Activated CD4-positive, alpha-beta T cell treated with anti-CD3 and anti-CD28 coated beads, Interleukin-2, amount 10 ng/mL, durations not matched to agents 24 days and 14 days (primary cell): ENCODE measurements at regions of chr1 and their contacts with region 1.

Region 1: DNA sequence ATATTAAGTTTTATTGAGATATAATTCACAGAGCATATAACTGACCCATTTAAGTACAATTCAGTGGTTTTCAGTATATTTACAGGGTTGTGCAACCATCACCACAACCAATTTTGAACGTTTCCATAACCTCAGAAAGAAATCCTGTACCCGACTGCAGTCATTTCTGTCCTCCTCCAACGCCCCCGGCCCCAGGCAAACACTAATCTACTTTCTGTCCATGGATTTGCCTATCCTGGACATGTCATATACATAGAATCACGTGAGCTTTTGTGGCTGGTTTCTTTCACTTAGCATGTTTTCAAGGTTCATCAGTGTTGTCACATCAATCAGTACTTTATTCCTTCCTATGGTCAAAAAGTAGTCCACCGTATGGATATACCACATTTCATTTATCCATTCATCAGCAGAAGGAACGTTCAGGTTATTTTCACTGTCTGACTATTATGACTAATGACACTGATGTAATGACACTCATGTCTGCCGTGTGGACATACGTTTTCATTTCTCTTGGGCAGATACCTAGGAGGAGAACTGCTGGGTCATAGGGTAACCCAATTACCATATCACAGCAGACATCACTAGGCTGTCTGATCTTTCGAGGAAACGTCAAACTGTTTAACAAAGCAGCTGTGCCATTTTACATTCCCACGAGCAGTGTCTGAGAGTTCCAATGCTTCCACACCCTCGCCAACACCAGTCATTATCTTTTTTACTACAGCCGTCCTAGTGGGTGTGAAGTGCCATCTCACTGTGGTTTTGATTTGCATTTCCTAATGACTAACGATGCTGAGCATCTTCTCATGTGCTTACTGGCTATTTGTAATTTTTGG is 30.8 kb downstream of the MRPL37 start:
- DNase-seq: no peak
- H3K4me3 Mint-ChIP-seq: peak overlapping the region; percentile 8
- H3K27ac Mint-ChIP-seq: peak overlapping the region; percentile 59
- H3K4me1 Mint-ChIP-seq: peaks cover 30% of the 10 kb centered on the region
- H3K27me3 Mint-ChIP-seq: no peaks in the 10 kb centered on the region

Region 2: GRCh38 chr1:54199765-54200518 is 30.8 kb before region 1 on chr1 and contains the starts of genes CYB5RL and MRPL37:
- intact Hi-C with region 1: loop called (anchors 2 kb)
- DNase-seq: peak; percentile 98
- H3K4me3 Mint-ChIP-seq: peak within 1 kb of the TSS; percentile 88
- H3K27ac Mint-ChIP-seq: peak within 1 kb of the TSS; percentile 73
- H3K4me1 Mint-ChIP-seq: peaks cover 29% of the 10 kb centered on the region
- H3K27me3 Mint-ChIP-seq: no peaks in the 10 kb centered on the region
- total RNA-seq, gene CYB5RL: 10.1 and 11.3 TPM in 2 replicates
- total RNA-seq, gene MRPL37: 158 and 162 TPM in 2 replicates

Region 3: GRCh38 chr1:54277451-54278341 is 47.0 kb after region 1 on chr1:
- intact Hi-C with region 1: loop called (anchors 2 kb)
- DNase-seq: peak; percentile 73
- H3K4me3 Mint-ChIP-seq: peak overlapping the region; percentile 80
- H3K27ac Mint-ChIP-seq: peak overlapping the region; percentile 98
- H3K4me1 Mint-ChIP-seq: peaks cover 63% of the 10 kb centered on the region
- H3K27me3 Mint-ChIP-seq: no peaks in the 10 kb centered on the region

Region 4: GRCh38 chr1:54287176-54287650 is 56.5 kb after region 1 on chr1:
- intact Hi-C with region 1: loop called (anchors 2 kb)
- DNase-seq: peak; percentile 94
- H3K4me3 Mint-ChIP-seq: peak overlapping the region; percentile 81
- H3K27ac Mint-ChIP-seq: peak overlapping the region; percentile 97
- H3K4me1 Mint-ChIP-seq: peaks cover 83% of the 10 kb centered on the region
- H3K27me3 Mint-ChIP-seq: no peaks in the 10 kb centered on the region

Region 5: GRCh38 chr1:54398963-54399528 is 168.3 kb after region 1 on chr1:
- intact Hi-C with region 1: loop called (anchors 2 kb)
- DNase-seq: no peak
- H3K4me3 Mint-ChIP-seq: peak overlapping the region; percentile 57
- H3K27ac Mint-ChIP-seq: peak overlapping the region; percentile 85
- H3K4me1 Mint-ChIP-seq: peaks cover 62% of the 10 kb centered on the region
- H3K27me3 Mint-ChIP-seq: no peaks in the 10 kb centered on the region